CD4-positive, alpha-beta T cell (primary cell): ENCODE measurements at regions of chr1 and their contacts with region 1.

Region 1: GRCh38 chr1:92960395-92961130 is 699 bp downstream of the DIPK1A start:
- DNase-seq: peak; percentile 44 to 90 (median 57)
- ATAC-seq: peak; percentile 53
- H3K4me3 ChIP-seq: peak overlapping the region; percentile 88
- H3K4me3 Mint-ChIP-seq: peak overlapping the region; percentile 96
- H3K27ac ChIP-seq: peak overlapping the region; percentile 85 to 99
- H3K27ac Mint-ChIP-seq: peak overlapping the region; percentile 99
- H3K4me1 ChIP-seq: peaks cover 66% of the 10 kb centered on the region
- H3K4me1 Mint-ChIP-seq: peaks cover 43% of the 10 kb centered on the region
- H3K27me3 ChIP-seq: no peaks in the 10 kb centered on the region
- H3K27me3 Mint-ChIP-seq: no peaks in the 10 kb centered on the region
- CTCF ChIP-seq: peak; percentile 78

Region 2: DNA sequence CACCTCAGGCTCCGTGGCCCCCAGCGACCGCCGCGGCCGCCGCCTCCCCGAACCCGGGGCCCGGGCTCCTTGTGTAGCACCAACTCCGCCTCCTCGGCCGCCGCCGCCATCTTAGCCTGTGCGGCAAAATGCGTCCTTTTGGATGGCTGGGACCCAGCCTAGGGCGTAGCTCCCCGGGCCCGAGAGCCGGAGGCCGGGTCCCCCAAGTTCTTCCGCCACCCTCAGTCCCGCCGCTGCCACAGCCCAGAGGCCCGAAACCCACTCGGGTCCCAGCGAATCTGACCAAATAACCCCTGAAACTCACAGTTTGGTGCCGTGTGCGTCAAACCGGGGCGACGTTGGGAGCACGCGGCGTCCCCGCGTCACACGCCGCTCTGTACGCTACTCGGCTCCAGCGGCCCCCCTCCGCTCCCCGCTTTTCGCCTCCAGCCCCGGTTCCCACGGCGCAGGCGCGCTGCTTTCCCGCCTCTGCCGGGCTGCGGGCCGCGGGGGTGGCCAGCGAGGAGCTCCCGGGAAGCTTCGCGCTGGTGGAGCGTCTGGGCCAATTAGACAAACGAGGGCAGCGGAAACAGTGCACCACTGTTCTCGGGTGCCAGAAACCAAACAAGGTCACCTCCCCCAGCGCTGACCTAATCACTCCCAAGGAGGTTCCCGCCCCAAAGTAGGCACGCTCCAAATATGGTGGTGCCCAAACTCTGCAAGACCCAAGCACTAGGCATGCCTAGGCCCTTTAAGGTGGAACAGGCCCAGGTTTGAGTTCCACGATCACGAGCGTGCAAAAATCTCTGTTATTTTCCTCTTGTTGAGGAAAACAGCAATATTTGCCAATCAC is 1938.7 kb before region 1 on chr1 and contains the start of gene ZNF644:
- CTCF ChIA-PET with region 1: no interaction called
- POLR2A ChIA-PET with region 1: no interaction called
- intact Hi-C with region 1: loop called in 1 of 2 experiments (anchors 10 kb)
- DNase-seq: peak; percentile 79 to 97 (median 84)
- ATAC-seq: peak; percentile 83
- H3K4me3 ChIP-seq: peak within 1 kb of the TSS; percentile 90
- H3K4me3 Mint-ChIP-seq: peak within 1 kb of the TSS; percentile 87
- H3K27ac ChIP-seq: peak within 1 kb of the TSS; percentile 99 to 100
- H3K27ac Mint-ChIP-seq: peak within 1 kb of the TSS; percentile 91
- H3K4me1 ChIP-seq: peaks cover 34% of the 10 kb centered on the region
- H3K4me1 Mint-ChIP-seq: peaks cover 77% of the 10 kb centered on the region
- H3K27me3 ChIP-seq: no peaks in the 10 kb centered on the region
- H3K27me3 Mint-ChIP-seq: no peaks in the 10 kb centered on the region
- CTCF ChIP-seq: no peak
- total RNA-seq, gene ZNF644: 93.3 to 101 TPM

Region 3: DNA sequence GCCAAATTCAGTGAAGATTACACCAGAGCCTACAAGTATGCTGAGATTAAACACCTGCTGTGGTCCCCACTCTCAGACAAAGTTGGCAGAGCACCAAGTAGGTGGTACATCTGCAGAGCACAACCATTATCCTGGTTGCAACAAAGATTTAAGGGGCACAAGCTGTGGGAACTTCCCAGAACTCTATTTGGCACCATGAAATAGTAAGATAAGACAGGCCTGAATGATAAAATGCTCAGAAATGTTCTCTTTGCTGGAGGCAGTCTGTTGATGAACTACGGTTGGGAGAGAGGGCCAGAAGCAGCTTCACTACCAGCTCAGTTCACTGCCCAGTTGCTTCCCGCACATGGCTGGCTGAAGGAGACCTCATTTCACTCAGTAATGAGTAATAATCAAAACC is 108.8 kb before region 1 on chr1:
- CTCF ChIA-PET with region 1: interaction called, 101 read pairs
- POLR2A ChIA-PET with region 1: interaction called, 59 read pairs
- intact Hi-C with region 1: no loop called
- DNase-seq: no peak
- ATAC-seq: no peak
- H3K4me3 ChIP-seq: no peak overlapping the region
- H3K4me3 Mint-ChIP-seq: no peak overlapping the region
- H3K27ac ChIP-seq: no peak overlapping the region
- H3K27ac Mint-ChIP-seq: peak overlapping the region; percentile 46
- H3K4me1 ChIP-seq: peaks cover 5% of the 10 kb centered on the region
- H3K4me1 Mint-ChIP-seq: peaks cover 12% of the 10 kb centered on the region
- H3K27me3 ChIP-seq: no peaks in the 10 kb centered on the region
- H3K27me3 Mint-ChIP-seq: no peaks in the 10 kb centered on the region
- CTCF ChIP-seq: no peak

Region 4: GRCh38 chr1:92882819-92883218 is 77.7 kb before region 1 on chr1:
- CTCF ChIA-PET with region 1: interaction called, 8 read pairs
- POLR2A ChIA-PET with region 1: interaction called, 34 read pairs
- intact Hi-C with region 1: loop called in 1 of 2 experiments (anchors 5 kb)
- DNase-seq: peak in 13 of 14 experiments; percentile 22 to 73 (median 45)
- ATAC-seq: peak; percentile 97
- H3K4me3 ChIP-seq: no peak overlapping the region
- H3K4me3 Mint-ChIP-seq: peak overlapping the region; percentile 27
- H3K27ac ChIP-seq: peak overlapping the region; percentile 33 to 65
- H3K27ac Mint-ChIP-seq: peak overlapping the region; percentile 86
- H3K4me1 ChIP-seq: peaks cover 22% of the 10 kb centered on the region
- H3K4me1 Mint-ChIP-seq: peaks cover 49% of the 10 kb centered on the region
- H3K27me3 ChIP-seq: no peaks in the 10 kb centered on the region
- H3K27me3 Mint-ChIP-seq: no peaks in the 10 kb centered on the region
- CTCF ChIP-seq: no peak

Region 5: GRCh38 chr1:92980732-92981647 is 20.4 kb after region 1 on chr1:
- CTCF ChIA-PET with region 1: interaction called, 8 read pairs
- POLR2A ChIA-PET with region 1: interaction called, 159 read pairs
- intact Hi-C with region 1: loop called in 1 of 2 experiments (anchors 1 kb)
- DNase-seq: peak in 12 of 14 experiments; percentile 26 to 92 (median 45)
- ATAC-seq: peak; percentile 93
- H3K4me3 ChIP-seq: no peak overlapping the region
- H3K4me3 Mint-ChIP-seq: peak overlapping the region; percentile 67
- H3K27ac ChIP-seq: peak overlapping the region; percentile 85 to 89
- H3K27ac Mint-ChIP-seq: peak overlapping the region; percentile 97
- H3K4me1 ChIP-seq: peaks cover 41% of the 10 kb centered on the region
- H3K4me1 Mint-ChIP-seq: peaks cover 41% of the 10 kb centered on the region
- H3K27me3 ChIP-seq: no peaks in the 10 kb centered on the region
- H3K27me3 Mint-ChIP-seq: no peaks in the 10 kb centered on the region
- CTCF ChIP-seq: no peak

Region 6: GRCh38 chr1:93078986-93079654 is 118.6 kb after region 1 on chr1 and contains the start of gene MTF2:
- CTCF ChIA-PET with region 1: interaction called, 4 read pairs
- POLR2A ChIA-PET with region 1: interaction called, 37 read pairs
- intact Hi-C with region 1: loop called in 1 of 2 experiments (anchors 5 kb)
- DNase-seq: peak; percentile 87 to 96 (median 92)
- ATAC-seq: peak; percentile 85
- H3K4me3 ChIP-seq: peak within 1 kb of the TSS; percentile 86
- H3K4me3 Mint-ChIP-seq: peak within 1 kb of the TSS; percentile 99
- H3K27ac ChIP-seq: peak within 1 kb of the TSS; percentile 81 to 82
- H3K27ac Mint-ChIP-seq: peak within 1 kb of the TSS; percentile 96
- H3K4me1 ChIP-seq: peaks cover 17% of the 10 kb centered on the region
- H3K4me1 Mint-ChIP-seq: peaks cover 61% of the 10 kb centered on the region
- H3K27me3 ChIP-seq: no peaks in the 10 kb centered on the region
- H3K27me3 Mint-ChIP-seq: no peaks in the 10 kb centered on the region
- CTCF ChIP-seq: no peak
- total RNA-seq, gene MTF2: 37.9 to 39.3 TPM

Region 7: GRCh38 chr1:93846211-93846991 is 885.8 kb after region 1 on chr1:
- CTCF ChIA-PET with region 1: interaction called, 3 read pairs
- POLR2A ChIA-PET with region 1: interaction called, 17 read pairs
- intact Hi-C with region 1: loop called (anchors 5 to 10 kb)
- DNase-seq: peak; percentile 74 to 95 (median 84)
- ATAC-seq: peak; percentile 46
- H3K4me3 ChIP-seq: peak overlapping the region; percentile 95
- H3K4me3 Mint-ChIP-seq: peak overlapping the region; percentile 89
- H3K27ac ChIP-seq: peak overlapping the region; percentile 79 to 87
- H3K27ac Mint-ChIP-seq: peak overlapping the region; percentile 100
- H3K4me1 ChIP-seq: peaks cover 23% of the 10 kb centered on the region
- H3K4me1 Mint-ChIP-seq: peaks cover 37% of the 10 kb centered on the region
- H3K27me3 ChIP-seq: no peaks in the 10 kb centered on the region
- H3K27me3 Mint-ChIP-seq: peaks cover 7% of the 10 kb centered on the region
- CTCF ChIP-seq: no peak